GM18951 (cell line): ENCODE measurements at regions of chr10 and their contacts with region 1.

Region 1: GRCh38 chr10:11757821-11758463 is 15.8 kb downstream of the ECHDC3 start:
- POLR2A ChIP-seq: no peak

Region 2: DNA sequence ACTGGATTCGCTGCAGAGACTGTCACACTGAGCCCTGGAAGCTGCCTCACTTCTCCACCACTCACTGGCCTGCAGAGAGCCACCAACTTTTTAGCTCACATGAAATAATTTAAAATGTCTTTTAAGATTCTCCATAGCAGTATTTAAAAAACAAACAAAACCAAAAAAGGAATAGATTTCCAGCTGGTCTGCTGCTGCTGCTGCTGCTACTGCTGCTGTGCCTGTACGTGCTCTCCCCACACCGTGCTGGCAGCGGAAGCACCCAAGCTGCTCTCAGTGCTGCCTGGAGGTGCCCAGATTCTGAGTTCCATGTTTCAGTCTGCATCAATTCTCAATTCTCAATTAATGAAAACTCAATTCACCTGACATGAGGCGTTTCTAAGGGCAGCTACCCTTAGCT is 292.5 kb before region 1 on chr10:
- in situ Hi-C with region 1: no loop called
- POLR2A ChIP-seq: no peak

Region 3: DNA sequence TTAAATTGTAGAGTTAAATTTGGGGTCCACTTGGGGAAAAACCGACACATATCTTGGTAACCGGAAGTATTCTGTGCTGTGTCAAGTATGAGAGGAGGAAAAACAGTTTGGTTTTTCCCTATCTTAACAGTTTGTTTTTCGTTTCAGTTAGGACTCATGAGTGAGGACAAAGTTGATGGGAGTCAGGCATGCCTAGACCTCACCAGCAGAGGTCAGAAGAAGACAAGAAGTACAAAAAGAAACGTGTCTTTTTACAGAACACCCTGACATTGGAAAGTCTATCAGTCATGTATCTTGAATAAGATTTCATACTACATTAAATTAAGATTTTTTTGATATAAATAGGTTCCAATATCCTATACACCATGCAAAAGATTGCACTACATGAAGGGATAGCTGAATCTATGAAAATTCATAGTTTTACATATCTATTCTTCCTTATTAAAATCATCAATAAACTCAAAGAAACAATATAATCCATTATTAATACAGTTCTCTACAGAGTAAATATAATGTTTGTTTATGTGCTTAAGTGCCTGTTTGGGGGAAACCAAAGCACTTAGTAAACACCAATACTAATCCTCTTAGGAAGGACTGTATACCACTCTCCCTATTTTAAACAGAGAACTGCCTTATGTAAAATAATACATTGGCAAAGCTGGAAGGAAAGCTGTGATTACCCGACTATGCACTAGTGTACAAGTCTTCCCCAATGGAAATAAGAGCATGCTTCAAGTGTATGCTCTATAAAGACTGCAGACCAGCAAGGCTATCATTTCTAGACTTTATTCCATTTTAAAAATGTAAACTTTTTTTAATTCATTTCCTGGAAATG is 242.1 kb before region 1 on chr10:
- in situ Hi-C with region 1: loop called (anchors 10 kb)
- POLR2A ChIP-seq: no peak

Region 4: GRCh38 chr10:11874542-11875177 is 116.7 kb after region 1 on chr10:
- in situ Hi-C with region 1: no loop called
- POLR2A ChIP-seq: no peak